ENCODE measurements at regions of chr2 and their contacts with region 1.

Region 1: GRCh38 chr2:118417406-118418120 is 329.3 kb downstream of the INSIG2 start:
- DNase-seq: no peak
- ATAC-seq: no peak
- H3K4me3 ChIP-seq: no peak overlapping the region
- H3K4me3 Mint-ChIP-seq: no peak overlapping the region
- H3K27ac ChIP-seq: no peak overlapping the region
- H3K27ac Mint-ChIP-seq: no peak overlapping the region
- H3K4me1 ChIP-seq: no peaks in the 10 kb centered on the region
- H3K4me1 Mint-ChIP-seq: no peaks in the 10 kb centered on the region
- H3K27me3 ChIP-seq: no peaks in the 10 kb centered on the region
- H3K27me3 Mint-ChIP-seq: peaks cover 6% of the 10 kb centered on the region
- CTCF ChIP-seq: no peak

Region 2: DNA sequence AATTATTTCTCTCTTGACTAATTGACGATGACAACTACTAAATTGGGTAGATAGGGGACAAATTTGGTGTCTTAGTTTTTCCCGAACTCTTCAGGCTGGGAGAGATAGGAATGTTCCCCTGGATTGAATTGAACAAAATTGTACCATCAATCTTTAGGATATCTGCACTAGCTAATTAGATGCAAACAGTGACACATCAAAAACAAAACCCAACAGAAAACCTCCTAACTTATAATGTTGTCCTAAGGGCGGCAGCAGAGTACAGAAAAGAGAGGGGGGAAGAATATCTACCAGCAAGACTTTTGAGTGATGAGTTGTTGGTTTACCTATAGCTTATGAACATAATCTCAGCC is 13.6 kb after region 1 on chr2:
- CTCF ChIA-PET with region 1: no interaction called
- POLR2A ChIA-PET with region 1: no interaction called
- intact Hi-C with region 1: no loop called
- DNase-seq: no peak
- ATAC-seq: no peak
- H3K4me3 ChIP-seq: no peak overlapping the region
- H3K4me3 Mint-ChIP-seq: no peak overlapping the region
- H3K27ac ChIP-seq: no peak overlapping the region
- H3K27ac Mint-ChIP-seq: no peak overlapping the region
- H3K4me1 ChIP-seq: no peaks in the 10 kb centered on the region
- H3K4me1 Mint-ChIP-seq: no peaks in the 10 kb centered on the region
- H3K27me3 ChIP-seq: no peaks in the 10 kb centered on the region
- H3K27me3 Mint-ChIP-seq: peaks cover 5% of the 10 kb centered on the region
- CTCF ChIP-seq: no peak

Region 3: DNA sequence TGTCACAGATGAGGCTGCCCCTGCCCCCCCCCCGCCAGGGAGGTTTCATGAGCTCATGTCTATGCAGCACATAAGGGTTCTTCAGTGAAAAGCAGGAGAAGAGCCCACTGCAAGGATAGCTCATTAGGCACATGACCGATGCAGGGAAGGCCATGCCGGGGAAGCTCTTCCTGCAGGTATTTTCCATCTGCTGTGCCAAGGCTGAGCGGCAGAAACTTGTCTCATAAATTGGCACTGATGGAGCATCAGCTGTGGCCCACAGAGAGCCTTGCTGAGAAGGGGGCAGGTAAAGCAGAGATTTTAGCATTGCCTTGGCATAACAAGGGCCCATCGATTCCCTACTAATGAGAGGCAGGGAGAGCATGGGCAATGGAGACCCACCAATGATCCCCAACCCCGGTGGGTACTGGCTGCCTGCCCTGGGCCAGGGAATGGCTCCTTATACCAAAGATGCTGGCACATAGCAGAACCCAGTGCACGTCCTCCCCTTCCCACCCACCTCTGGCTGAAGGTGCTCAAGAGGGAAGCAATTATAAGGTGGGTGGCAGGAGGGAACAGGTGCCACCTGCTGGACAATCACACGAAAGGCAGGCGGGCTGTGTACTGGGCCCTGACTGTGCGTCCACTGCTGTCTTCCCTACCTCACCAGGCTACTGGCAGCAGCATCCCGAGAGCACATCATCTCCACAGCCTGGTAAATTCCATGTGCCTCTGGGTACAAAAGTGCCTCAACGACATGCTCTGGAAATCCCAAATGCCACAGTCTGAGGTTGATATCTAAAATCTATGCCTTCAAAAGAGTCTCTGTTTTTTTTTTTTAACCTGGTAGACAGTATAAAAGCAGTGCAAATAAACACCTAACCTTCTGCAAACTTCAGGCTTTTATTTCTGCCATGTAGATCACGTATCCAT is 847.5 kb after region 1 on chr2:
- CTCF ChIA-PET with region 1: no interaction called
- POLR2A ChIA-PET with region 1: no interaction called
- intact Hi-C with region 1: loop called in 1 of 2 experiments (anchors 10 kb)
- DNase-seq: peak in 5 of 9 experiments; percentile 15 to 59 (median 27)
- ATAC-seq: no peak
- H3K4me3 ChIP-seq: no peak overlapping the region
- H3K4me3 Mint-ChIP-seq: no peak overlapping the region
- H3K27ac ChIP-seq: no peak overlapping the region
- H3K27ac Mint-ChIP-seq: no peak overlapping the region
- H3K4me1 ChIP-seq: no peaks in the 10 kb centered on the region
- H3K4me1 Mint-ChIP-seq: no peaks in the 10 kb centered on the region
- H3K27me3 ChIP-seq: no peaks in the 10 kb centered on the region
- H3K27me3 Mint-ChIP-seq: peaks cover 7% of the 10 kb centered on the region
- CTCF ChIP-seq: peak; percentile 32